ENCODE measurements at regions of chr1 and their contacts with region 1.

Region 1: DNA sequence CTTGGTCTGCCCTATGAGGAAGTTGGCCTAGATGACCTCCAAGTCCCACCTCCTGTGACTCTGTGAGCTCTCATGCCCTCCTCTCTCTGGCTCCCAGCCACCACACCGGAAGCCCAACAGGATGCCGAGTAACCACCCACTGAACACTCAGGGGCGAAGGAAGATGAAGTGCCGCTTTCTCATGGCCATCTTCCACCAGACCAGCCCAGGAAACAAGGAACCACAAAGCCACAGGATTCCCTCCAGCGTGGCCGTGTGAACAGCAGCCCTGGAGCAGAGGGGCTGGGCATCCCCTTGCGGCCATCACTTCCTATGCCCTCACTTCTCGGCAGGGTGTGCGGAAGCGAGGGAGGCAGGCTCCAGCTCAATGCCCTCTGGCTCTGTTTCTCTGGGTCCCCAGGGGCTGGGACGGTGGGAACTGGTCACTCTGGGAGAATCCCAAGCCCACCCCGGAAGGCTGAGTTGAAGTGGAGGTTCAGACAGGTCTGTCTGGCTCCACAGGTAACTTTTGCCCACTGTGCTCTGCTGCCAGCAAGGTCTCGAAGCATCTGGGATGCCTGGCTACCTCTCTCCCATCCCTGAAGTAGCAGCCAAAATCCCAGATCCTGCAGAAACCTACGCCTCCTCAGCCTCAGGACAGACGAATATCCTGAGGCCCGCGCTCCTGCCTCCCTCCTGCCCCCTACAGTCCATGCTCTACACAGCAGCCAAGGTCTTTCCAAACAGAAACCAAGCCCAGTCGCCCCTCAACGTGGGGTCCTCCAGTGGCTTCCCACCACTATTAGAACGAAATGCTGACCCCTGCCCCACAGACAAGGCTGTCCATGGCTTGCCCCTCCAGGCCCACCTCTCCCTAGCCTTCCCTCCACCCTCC is 44.2 kb upstream of the ECE1 start:
- DNase-seq: peak; percentile 86
- ATAC-seq: peak; percentile 74
- H3K4me3 ChIP-seq: peak overlapping the region; percentile 31
- H3K27ac ChIP-seq: peak overlapping the region; percentile 74
- H3K4me1 ChIP-seq: peaks cover 54% of the 10 kb centered on the region
- H3K27me3 ChIP-seq: no peaks in the 10 kb centered on the region
- CTCF ChIP-seq: peak; percentile 86
- POLR2A ChIP-seq: 0 out of 2 replicates have a peak, but pooled peaks have one; percentile 32
- RAD21 ChIP-seq: peak; percentile 77

Region 2: GRCh38 chr1:21255278-21255942 is 79.0 kb before region 1 on chr1:
- CTCF ChIA-PET with region 1: interaction called, 5 read pairs
- POLR2A ChIA-PET with region 1: no interaction called
- dilution Hi-C with region 1: no loop called
- in situ Hi-C with region 1: loop called (anchors 5 kb)
- intact Hi-C with region 1: loop called (anchors 1 kb)
- DNase-seq: peak; percentile 79
- ATAC-seq: peak; percentile 90
- H3K4me3 ChIP-seq: no peak overlapping the region
- H3K27ac ChIP-seq: no peak overlapping the region
- H3K4me1 ChIP-seq: peaks cover 8% of the 10 kb centered on the region
- H3K27me3 ChIP-seq: no peaks in the 10 kb centered on the region
- CTCF ChIP-seq: peak; percentile 85
- POLR2A ChIP-seq: 0 out of 2 replicates have a peak, but pooled peaks have one; percentile 40
- RAD21 ChIP-seq: peak; percentile 96

Region 3: DNA sequence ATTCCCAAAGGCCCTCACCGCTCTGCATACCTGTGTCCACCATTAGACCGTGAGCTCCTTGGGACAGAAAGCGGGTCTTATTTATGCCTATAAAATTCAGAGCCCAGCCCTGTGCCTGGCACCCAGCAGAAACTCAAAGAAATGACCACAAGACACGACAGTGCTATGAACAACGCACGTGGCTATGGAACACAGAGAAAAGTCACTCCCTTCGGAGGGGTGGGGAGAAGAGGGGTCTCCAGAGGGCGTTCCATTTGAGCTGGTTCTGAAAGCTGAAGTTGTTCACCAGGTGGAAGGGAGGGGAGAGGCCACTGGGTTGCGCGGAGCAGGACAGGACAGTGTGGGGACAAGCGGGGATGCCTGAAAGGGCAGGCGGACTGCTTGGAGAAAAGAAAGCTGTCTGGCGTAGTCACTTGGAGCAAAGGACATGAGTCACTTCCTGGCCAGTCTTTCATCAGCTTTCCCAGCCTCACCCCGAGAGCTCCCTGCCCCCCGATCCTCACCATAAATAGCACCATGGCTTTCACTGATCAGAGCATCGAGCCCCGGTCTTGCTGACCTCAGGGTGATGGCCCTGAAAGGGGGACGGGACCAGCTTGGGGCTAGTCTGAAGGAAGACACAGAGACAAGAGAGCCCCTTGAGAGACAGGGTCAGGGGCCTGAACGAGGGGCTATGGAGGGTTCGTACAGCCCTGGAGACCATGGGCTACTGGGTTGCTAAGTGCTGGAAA is 72.7 kb before region 1 on chr1:
- CTCF ChIA-PET with region 1: no interaction called
- POLR2A ChIA-PET with region 1: no interaction called
- dilution Hi-C with region 1: no loop called
- in situ Hi-C with region 1: loop called (anchors 5 kb)
- intact Hi-C with region 1: loop called (anchors 2 kb)
- DNase-seq: peak; percentile 96
- ATAC-seq: peak; percentile 76
- H3K4me3 ChIP-seq: no peak overlapping the region
- H3K27ac ChIP-seq: peak overlapping the region; percentile 94
- H3K4me1 ChIP-seq: peaks cover 47% of the 10 kb centered on the region
- H3K27me3 ChIP-seq: no peaks in the 10 kb centered on the region
- CTCF ChIP-seq: no peak
- POLR2A ChIP-seq: peak; percentile 79
- RAD21 ChIP-seq: no peak

Region 4: DNA sequence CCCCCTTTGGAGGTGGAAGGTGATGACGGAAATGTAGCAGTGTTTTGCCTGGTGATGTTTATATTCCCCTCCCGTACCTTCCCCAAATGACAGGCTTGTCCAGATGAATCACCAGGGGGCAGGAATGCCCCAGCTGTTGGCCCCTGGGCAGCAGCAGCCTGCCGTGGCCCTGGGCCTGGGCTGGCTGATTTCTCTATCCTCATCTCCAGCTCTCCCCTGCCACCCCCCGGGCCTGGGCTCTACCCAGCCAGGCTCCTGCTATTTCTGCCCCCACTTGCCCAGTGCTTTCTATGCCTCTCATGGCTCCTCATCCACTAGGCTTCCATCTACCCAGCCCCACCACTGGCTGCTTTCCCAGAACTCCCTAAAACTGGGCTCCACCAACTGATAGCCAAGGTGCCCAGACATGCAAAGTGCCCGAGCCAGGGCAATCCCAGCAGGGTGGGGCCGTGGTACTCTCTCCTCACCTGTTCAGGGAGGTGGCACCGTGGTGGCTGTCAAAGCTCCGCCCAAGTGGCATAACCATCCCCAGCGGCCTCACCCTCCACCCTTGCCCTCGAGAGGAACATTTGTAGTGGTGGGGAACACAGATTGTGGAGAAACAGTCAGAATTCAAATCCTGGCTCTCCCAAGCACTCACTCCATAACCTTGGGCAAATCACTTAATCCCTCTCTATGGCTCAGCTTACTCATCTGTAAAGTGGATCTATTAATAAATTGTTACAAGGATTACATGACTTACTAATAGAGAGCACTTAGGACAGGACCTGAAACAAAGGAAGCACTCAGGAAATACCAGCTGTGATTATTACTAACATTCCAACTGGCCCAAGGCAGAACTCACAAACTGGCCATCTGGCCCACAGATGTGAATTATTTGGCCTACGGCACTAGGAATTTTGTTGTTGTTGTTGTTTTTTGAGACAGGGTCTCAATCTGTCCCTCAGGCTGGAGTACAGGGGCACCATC is 31.4 kb before region 1 on chr1:
- CTCF ChIA-PET with region 1: interaction called, 3 read pairs
- POLR2A ChIA-PET with region 1: interaction called, 15 read pairs
- dilution Hi-C with region 1: no loop called
- in situ Hi-C with region 1: no loop called
- intact Hi-C with region 1: loop called (anchors 2 kb)
- DNase-seq: peak; percentile 93
- ATAC-seq: peak; percentile 71
- H3K4me3 ChIP-seq: no peak overlapping the region
- H3K27ac ChIP-seq: peak overlapping the region; percentile 79
- H3K4me1 ChIP-seq: peaks cover 43% of the 10 kb centered on the region
- H3K27me3 ChIP-seq: no peaks in the 10 kb centered on the region
- CTCF ChIP-seq: peak; percentile 38
- POLR2A ChIP-seq: no peak
- RAD21 ChIP-seq: peak; percentile 32; the same call in 1 of the 2 replicates

Region 5: DNA sequence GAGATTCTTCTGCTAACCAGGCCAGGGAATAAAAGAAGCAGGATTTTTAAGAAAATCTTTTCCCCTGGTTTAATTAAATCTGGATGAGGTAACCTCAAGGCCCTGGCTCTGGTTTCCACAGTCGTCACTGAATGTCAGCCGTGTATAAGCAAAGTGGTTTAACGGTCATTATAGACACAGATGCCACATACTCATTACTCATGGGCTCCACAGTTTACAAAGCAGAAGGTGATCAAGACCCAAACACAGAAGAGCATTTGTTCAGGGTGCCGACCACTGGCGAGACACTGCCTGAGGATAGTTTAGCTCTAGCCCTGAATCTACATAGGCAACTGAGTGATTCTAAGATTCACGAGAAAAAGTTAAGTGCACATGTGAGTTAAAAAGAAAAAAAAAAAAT is 362.5 kb after region 1 on chr1:
- CTCF ChIA-PET with region 1: no interaction called
- POLR2A ChIA-PET with region 1: no interaction called
- dilution Hi-C with region 1: no loop called
- in situ Hi-C with region 1: no loop called
- intact Hi-C with region 1: no loop called
- DNase-seq: peak; percentile 85
- ATAC-seq: peak; percentile 60
- H3K4me3 ChIP-seq: no peak overlapping the region
- H3K27ac ChIP-seq: no peak overlapping the region
- H3K4me1 ChIP-seq: no peaks in the 10 kb centered on the region
- H3K27me3 ChIP-seq: no peaks in the 10 kb centered on the region
- CTCF ChIP-seq: no peak
- POLR2A ChIP-seq: no peak
- RAD21 ChIP-seq: no peak

Measured in IMR-90 (cell line).